ENCODE measurements at regions of chr15 and their contacts with region 1.

Region 1: DNA sequence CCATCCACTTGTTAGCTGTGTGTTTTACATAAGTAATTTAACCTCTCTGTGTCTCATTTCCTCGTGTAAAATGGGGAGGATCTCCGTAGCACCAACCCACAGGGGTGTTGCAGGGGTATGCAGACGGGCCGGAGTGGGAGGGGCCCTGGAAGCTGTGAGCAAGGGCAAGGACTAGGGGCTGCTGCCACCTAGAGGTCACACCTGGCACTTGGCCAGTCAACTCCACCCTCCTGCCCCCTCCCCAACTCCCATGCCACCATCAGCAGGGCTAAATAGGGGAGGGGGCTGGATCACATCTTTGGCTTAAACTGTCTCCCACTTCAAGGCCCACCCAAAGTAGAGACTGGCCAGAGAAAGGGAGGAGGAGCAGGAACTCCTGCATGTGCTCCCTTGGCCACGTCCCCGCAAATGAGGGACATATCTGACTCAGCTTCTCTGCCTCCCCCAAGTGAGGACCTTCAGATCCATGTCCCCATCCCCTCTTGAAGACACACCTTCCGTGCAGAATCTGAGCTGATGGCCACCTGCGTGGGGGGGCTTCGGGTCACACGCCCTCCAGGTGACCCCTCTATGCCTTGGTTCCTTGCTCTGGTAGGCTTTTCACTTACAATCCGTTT is 2.6 kb downstream of the CCDC9B start:
- DNase-seq: peak in 1 of 2 experiments; percentile 93
- H3K4me3 ChIP-seq: no peak overlapping the region
- H3K27ac ChIP-seq: no peak overlapping the region
- H3K4me1 ChIP-seq: peaks cover 0 to 44% (median 28%) of the 10 kb centered on the region in 4 experiments; a peak in 6 of 7 replicates
- H3K27me3 ChIP-seq: peaks cover 0 to 4% (median under 1%) of the 10 kb centered on the region in 4 experiments; a peak in 1 of 7 replicates
- CTCF ChIP-seq: peak in 2 of 3 experiments; percentile 90 to 97; a peak in 3 of 4 replicates
- EP300 ChIP-seq: no peak
- POLR2A ChIP-seq: no peak
- RAD21 ChIP-seq: peak; percentile 87 to 88

Region 2: DNA sequence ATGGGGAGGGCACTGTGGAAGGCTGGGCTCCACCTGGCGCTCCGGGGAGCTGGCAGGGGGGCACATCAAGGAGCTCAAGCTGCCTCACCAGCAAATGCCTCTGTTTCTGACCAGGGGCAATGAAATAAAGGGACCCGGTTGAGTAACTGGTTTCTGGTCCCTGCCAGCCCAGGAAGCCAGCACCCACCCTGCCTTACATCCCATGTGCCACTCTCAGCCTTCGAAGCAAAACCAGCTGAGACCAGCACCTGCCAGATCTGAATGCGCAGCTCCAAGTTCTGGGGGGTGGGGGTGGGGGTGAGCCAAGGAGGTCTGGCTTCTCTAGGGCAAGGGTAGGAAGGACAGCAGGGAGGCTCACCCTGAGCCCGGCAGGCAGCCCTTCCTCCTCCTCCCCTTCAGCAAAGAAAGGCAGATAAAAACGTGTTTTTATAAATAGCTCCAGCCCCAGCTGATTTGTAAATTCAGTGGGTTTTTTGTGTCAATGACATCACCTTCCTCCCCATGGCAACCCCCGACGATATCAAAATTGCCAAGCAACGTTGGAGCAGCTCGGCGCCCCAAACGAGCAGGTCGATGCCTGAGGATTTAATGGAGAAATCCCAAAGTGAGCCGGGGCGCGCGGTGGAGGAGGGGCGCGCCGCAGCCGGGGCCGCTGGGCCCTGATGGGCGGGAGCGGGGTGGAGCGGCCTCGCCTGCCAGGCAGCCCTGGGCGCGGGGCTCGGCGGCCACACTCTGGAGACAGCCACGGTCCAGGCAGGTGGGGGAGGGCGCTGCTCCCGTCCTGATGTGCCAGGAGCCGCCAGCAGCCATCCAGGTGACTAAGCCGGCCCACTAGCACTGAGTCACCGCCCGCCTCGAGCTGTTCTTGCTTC is 99.4 kb before region 1 on chr15 and contains the start of gene PAK6:
- CTCF ChIA-PET with region 1: interaction called, 12 read pairs
- POLR2A ChIA-PET with region 1: no interaction called
- DNase-seq: peak; percentile 60 to 90
- H3K4me3 ChIP-seq: peak within 1 kb of the TSS; percentile 14 to 54 (median 30); a peak in 7 of 8 replicates
- H3K27ac ChIP-seq: no peak within 1 kb of the TSS
- H3K4me1 ChIP-seq: peaks cover 9 to 18% (median 14%) of the 10 kb centered on the region in 4 experiments
- H3K27me3 ChIP-seq: peaks cover 0 to 6% (median 2%) of the 10 kb centered on the region in 4 experiments; a peak in 2 of 7 replicates
- CTCF ChIP-seq: peak in 1 of 3 experiments; percentile 4; a peak in 1 of 4 replicates
- EP300 ChIP-seq: no peak
- POLR2A ChIP-seq: peak in 1 of 2 experiments; percentile 64; a peak in 2 of 3 replicates
- RAD21 ChIP-seq: no peak
- total RNA-seq, gene PAK6: 9.0 and 9.4 TPM in 2 replicates

Region 3: DNA sequence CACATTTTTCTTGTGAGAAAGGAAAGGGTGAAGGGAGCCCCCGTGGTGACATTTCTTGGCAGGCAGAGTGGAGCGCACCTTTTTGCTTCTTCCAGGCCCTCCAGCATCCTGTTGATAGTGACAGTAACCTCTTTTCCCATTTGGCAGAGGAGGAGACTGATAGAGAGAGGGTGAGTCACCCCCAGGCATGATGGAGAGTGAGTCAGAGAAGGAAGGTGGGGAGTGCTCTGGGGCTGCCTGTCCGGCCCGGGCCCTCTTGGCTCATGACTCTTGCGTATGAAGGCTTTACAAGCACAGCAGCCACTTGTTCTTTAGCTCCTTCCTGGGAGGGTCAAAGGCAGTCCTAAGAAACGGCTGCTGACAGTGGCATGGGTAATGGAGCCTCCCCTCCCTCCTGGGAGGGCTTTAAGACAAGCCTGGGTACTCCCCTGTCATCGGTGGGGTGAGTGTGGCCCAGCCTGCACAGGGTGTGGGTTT is 71.3 kb before region 1 on chr15:
- CTCF ChIA-PET with region 1: interaction called, 295 read pairs
- POLR2A ChIA-PET with region 1: no interaction called
- DNase-seq: no peak
- H3K4me3 ChIP-seq: no peak overlapping the region
- H3K27ac ChIP-seq: no peak overlapping the region
- H3K4me1 ChIP-seq: peaks cover 0 to 4% (median under 1%) of the 10 kb centered on the region in 4 experiments; a peak in 4 of 7 replicates
- H3K27me3 ChIP-seq: no peaks in the 10 kb centered on the region
- CTCF ChIP-seq: no peak
- EP300 ChIP-seq: no peak
- POLR2A ChIP-seq: no peak
- RAD21 ChIP-seq: no peak

Region 4: GRCh38 chr15:40323239-40323952 is 14.8 kb before region 1 on chr15 and contains the start of gene INAFM2:
- CTCF ChIA-PET with region 1: interaction called, 584 read pairs
- POLR2A ChIA-PET with region 1: interaction called, 66 read pairs
- DNase-seq: peak; percentile 90 to 92
- H3K4me3 ChIP-seq: peak within 1 kb of the TSS; percentile 62 to 79 (median 70)
- H3K27ac ChIP-seq: no peak within 1 kb of the TSS
- H3K4me1 ChIP-seq: peaks cover 21 to 44% (median 31%) of the 10 kb centered on the region in 4 experiments
- H3K27me3 ChIP-seq: peaks cover 0 to 20% (median 9%) of the 10 kb centered on the region in 4 experiments; a peak in 4 of 7 replicates
- CTCF ChIP-seq: peak; percentile 22 to 36 (median 30)
- EP300 ChIP-seq: peak in 1 of 2 experiments; percentile 58; a peak in 1 of 3 replicates
- POLR2A ChIP-seq: peak in 1 of 2 experiments; percentile 49; a peak in 1 of 3 replicates
- RAD21 ChIP-seq: peak in 1 of 2 experiments; percentile 20; a peak in 1 of 4 replicates
- total RNA-seq, gene INAFM2: 35.1 and 38.2 TPM in 2 replicates

Region 5: DNA sequence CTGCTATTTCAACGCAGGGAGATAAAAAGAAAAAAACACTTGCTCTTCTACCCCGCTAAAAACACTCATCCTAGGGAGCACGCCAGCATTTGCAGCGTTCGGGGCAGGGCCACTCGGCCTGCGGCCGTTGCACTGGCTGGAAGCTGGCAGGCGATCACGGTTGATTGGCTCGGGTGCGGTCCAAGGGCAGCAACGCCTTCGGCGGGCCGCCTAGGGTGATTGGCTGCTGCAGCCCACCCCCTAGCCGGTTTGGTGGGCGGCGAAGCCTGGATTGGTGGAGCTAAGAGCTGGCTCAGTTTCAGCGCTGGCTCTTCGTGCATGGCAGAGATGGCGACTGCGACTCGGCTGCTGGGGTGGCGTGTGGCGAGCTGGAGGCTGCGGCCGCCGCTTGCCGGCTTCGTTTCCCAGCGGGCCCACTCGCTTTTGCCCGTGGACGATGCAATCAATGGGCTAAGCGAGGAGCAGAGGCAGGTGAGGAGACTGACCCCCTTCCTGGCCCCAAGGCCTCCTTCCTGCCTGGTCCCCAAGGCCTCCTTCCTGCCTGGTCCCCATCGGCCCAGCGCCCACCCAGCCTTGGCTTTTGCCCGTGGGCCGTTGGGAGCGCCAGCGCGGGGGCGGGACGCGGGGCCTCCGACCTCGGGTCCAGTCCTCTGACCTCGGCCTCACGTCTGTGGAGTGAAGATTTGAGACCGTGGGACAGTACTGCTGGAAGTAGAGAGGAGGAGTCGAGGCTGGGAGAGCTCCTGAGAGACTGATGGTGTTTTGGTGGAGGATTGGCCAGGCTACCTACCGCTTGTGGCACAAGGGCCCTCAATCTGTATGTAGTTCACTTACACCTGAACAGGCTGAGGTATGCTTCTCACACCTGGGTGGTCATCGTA is 67.6 kb after region 1 on chr15 and contains the start of gene IVD:
- CTCF ChIA-PET with region 1: interaction called, 184 read pairs
- POLR2A ChIA-PET with region 1: interaction called, 3 read pairs
- DNase-seq: peak; percentile 78 to 92
- H3K4me3 ChIP-seq: peak within 1 kb of the TSS; percentile 67 to 82 (median 74)
- H3K27ac ChIP-seq: peak within 1 kb of the TSS; percentile 72; the same call in 1 of the 2 replicates
- H3K4me1 ChIP-seq: peaks cover 0 to 4% (median 1%) of the 10 kb centered on the region in 4 experiments; a peak in 3 of 7 replicates
- H3K27me3 ChIP-seq: no peaks in the 10 kb centered on the region
- CTCF ChIP-seq: no peak
- EP300 ChIP-seq: no peak
- POLR2A ChIP-seq: peak; percentile 84 to 88
- RAD21 ChIP-seq: no peak
- total RNA-seq, gene IVD: 78.8 and 80.0 TPM in 2 replicates

Region 6: DNA sequence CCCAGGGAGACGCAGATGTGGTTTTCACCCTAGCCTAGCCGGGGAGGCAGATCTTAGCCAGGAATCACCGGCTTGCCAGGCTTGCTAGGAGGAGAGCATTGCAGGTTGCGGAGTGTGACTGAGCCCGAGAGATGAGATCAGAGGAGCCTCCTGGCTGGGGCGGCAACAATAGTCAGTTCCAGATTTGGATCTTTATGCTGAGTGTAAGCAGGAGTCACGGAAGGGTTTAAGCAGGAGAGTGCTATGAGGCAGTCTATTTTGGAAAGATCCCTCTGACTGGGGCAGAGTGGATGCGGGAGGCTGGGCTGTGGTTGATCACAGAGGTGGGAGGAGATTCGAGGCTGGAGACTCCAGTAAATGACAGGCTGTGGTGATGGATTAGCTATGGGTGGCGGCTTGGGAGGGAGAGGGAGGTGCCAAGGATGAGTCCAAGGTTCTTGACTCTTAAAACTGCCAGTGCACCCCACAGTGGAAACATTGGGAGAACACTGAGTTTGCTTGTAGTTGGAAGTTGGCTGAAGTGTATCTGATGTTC is 92.2 kb after region 1 on chr15:
- CTCF ChIA-PET with region 1: interaction called, 184 read pairs
- POLR2A ChIA-PET with region 1: no interaction called
- DNase-seq: no peak
- H3K4me3 ChIP-seq: no peak overlapping the region
- H3K27ac ChIP-seq: no peak overlapping the region
- H3K4me1 ChIP-seq: peaks cover 4 to 16% (median 9%) of the 10 kb centered on the region in 4 experiments
- H3K27me3 ChIP-seq: peaks cover 0 to 26% (median 8%) of the 10 kb centered on the region in 4 experiments; a peak in 5 of 7 replicates
- CTCF ChIP-seq: no peak
- EP300 ChIP-seq: no peak
- POLR2A ChIP-seq: no peak
- RAD21 ChIP-seq: no peak

Measured in H1 (cell line).